CD4-positive, alpha-beta memory T cell (primary cell): ENCODE measurements at regions of chr3 and their contacts with region 1.

Region 1: DNA sequence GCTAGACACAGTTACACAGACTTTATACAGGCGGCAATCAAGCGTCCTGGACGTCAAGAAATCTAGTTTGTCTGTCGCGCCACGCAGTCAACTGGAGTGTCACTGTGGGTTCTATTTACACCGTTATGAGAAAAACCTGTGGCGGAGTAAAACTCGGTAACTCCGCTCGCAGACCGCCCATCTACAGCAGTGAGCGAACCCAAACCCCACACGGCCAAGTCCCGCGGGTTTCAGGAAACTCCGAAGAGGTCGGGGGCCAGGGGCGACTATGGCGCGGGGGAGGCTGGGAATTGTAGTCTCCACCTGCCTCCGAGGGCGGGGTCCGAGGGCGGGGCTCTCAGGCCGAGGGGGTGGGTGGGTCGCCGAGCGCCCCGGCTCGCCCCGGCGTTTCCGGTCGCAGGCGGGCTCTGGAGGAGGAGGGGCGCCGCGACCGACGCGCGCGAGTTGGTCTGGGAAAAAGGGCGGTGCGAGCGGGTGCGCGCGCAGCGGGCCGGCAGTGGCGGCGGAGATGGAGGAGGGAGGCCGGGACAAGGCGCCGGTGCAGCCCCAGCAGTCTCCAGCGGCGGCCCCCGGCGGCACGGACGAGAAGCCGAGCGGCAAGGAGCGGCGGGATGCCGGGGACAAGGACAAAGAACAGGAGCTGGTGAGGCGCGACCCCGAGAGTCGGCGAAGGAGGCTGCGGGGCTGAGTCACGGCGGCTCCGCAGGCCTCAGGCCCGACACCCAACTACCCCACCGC is at the start of gene PSMD2:
- DNase-seq: peak; percentile 96 to 97 (median 96)
- H3K4me3 ChIP-seq: peak within 1 kb of the TSS; percentile 68 to 85
- H3K4me3 Mint-ChIP-seq: peak within 1 kb of the TSS; percentile 88 to 96 (median 94)
- H3K27ac ChIP-seq: peak within 1 kb of the TSS; percentile 73
- H3K27ac Mint-ChIP-seq: peak within 1 kb of the TSS; percentile 90 to 95 (median 94)
- H3K4me1 ChIP-seq: peaks cover 14% of the 10 kb centered on the region
- H3K4me1 Mint-ChIP-seq: peaks cover 14 to 35% (median 21%) of the 10 kb centered on the region in 4 donors
- H3K27me3 ChIP-seq: no peaks in the 10 kb centered on the region
- H3K27me3 Mint-ChIP-seq: no peaks in the 10 kb centered on the region
- total RNA-seq, gene PSMD2: 148 to 154 TPM

Region 2: DNA sequence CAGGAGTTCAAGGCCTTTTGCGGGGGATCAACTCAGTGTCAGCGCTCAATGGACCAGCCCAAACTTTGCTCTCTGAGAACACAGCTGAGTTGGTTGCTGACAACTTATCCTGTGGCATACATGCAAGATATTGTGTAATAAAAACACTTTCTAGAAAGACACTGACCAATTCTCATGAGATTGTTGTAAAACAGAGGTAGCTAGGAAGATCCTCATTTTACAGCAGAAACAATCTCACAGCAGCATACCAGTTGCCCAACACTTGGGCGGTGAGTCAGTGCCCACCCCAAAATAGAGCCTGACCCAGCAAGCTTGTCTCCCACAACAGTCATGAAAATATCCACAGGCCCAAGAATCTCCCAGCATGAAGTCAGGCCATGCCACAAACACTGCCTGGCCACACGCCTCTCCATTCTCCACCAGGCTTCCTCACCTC is 761.6 kb before region 1 on chr3:
- CTCF ChIA-PET with region 1: no interaction called
- POLR2A ChIA-PET with region 1: no interaction called
- intact Hi-C with region 1: no loop called
- DNase-seq: no peak
- H3K4me3 ChIP-seq: no peak overlapping the region
- H3K4me3 Mint-ChIP-seq: no peak overlapping the region
- H3K27ac ChIP-seq: no peak overlapping the region
- H3K27ac Mint-ChIP-seq: peak overlapping the region in 5 of 7 donors; percentile 10 to 74 (median 50)
- H3K4me1 ChIP-seq: peaks cover 64% of the 10 kb centered on the region
- H3K4me1 Mint-ChIP-seq: peaks cover 54 to 79% (median 68%) of the 10 kb centered on the region in 4 donors
- H3K27me3 ChIP-seq: no peaks in the 10 kb centered on the region
- H3K27me3 Mint-ChIP-seq: no peaks in the 10 kb centered on the region

Region 3: DNA sequence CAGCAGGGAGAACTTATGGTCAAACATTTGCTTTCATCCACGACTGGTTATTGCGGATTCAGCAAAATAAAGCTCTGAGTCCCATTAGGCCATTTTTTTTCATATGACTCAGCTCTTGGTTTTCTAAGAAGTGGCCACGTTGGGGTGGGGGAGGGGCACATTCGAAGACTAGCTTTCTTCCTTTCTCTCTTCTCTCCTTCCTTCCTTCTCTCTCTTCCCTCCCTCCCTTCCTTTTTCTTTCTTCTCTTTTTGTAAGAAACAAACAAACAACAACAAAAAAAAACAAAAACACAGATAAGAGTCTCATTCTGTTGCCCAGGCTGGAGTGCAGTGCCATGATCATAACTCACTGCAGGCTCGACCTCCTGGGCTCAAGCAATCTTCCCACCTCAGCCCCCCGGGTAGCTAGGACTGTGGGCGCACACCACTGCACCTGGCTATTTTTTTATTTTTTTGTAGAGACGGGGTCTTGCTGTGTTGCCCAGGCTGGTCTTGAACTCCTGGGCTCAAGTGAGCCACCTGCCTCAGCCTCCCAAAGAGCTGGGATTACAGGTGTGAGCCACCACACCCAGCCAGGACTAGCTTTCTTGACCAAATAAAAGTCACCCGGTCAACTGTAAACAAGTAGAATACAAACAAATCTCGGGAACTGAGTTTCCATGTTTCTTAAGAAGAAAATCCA is 322.8 kb before region 1 on chr3:
- CTCF ChIA-PET with region 1: no interaction called
- POLR2A ChIA-PET with region 1: no interaction called
- intact Hi-C with region 1: no loop called
- DNase-seq: no peak
- H3K4me3 ChIP-seq: no peak overlapping the region
- H3K4me3 Mint-ChIP-seq: no peak overlapping the region
- H3K27ac ChIP-seq: no peak overlapping the region
- H3K27ac Mint-ChIP-seq: peak overlapping the region in 1 of 7 donors; percentile 6
- H3K4me1 ChIP-seq: no peaks in the 10 kb centered on the region
- H3K4me1 Mint-ChIP-seq: no peaks in the 10 kb centered on the region
- H3K27me3 ChIP-seq: no peaks in the 10 kb centered on the region
- H3K27me3 Mint-ChIP-seq: no peaks in the 10 kb centered on the region

Region 4: GRCh38 chr3:184017672-184018423 is 281.1 kb before region 1 on chr3 and contains the start of gene ABCC5:
- CTCF ChIA-PET with region 1: interaction called, 4 read pairs
- POLR2A ChIA-PET with region 1: no interaction called
- intact Hi-C with region 1: loop called (anchors 1 kb)
- DNase-seq: peak; percentile 79 to 84 (median 82)
- H3K4me3 ChIP-seq: peak within 1 kb of the TSS; percentile 93 to 96
- H3K4me3 Mint-ChIP-seq: peak within 1 kb of the TSS; percentile 98 to 100 (median 100)
- H3K27ac ChIP-seq: peak within 1 kb of the TSS; percentile 43
- H3K27ac Mint-ChIP-seq: peak within 1 kb of the TSS; percentile 90 to 96 (median 93)
- H3K4me1 ChIP-seq: peaks cover 17% of the 10 kb centered on the region
- H3K4me1 Mint-ChIP-seq: peaks cover 16 to 35% (median 24%) of the 10 kb centered on the region in 4 donors
- H3K27me3 ChIP-seq: no peaks in the 10 kb centered on the region
- H3K27me3 Mint-ChIP-seq: peaks cover 6 to 8% of the 10 kb centered on the region in 2 donors
- total RNA-seq, gene ABCC5: 42.3 to 42.6 TPM

Region 5: DNA sequence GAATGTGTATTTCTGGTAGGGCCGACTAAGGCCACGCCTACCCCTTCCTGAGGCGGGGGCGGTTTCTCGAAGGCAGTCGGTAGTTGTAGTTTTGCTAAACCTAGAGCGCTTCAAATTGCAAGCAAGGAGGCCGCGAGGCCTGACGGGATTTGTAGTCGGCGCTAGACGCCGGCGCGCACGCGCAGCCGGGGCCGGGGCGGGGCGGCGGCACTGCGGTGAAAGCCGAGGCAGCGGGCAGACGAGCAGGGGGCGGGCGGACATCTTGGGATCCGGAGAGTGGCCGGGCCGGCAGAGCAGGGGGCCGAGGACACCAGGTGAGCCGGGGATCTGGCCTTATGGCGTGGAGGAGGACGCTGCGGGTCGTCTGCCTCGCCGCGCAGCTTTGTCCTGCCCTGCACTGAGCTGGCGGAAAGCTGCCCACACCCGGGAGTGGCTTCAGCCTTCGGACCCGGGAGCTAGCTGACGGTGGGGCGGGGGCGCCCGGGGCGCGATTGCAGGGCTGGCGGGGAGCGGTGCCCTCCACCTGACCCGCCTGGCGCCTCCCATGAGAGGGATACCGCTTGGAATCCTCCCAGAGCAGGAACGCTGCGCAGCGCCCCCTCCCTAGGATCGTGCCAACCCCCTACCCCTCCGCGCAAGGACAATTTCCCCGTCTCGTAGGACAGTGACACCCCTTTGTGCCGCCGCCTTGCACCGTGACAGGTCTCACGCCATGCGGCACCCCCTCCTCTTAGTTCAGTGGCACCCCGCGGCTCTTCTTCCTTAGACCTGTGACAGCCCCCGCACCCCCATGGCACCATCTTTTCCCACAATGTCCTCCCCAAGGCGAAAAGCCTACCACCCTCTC is 124.1 kb before region 1 on chr3 and contains the start of gene AP2M1:
- CTCF ChIA-PET with region 1: no interaction called
- POLR2A ChIA-PET with region 1: interaction called, 8 read pairs
- intact Hi-C with region 1: loop called (anchors 1 kb)
- DNase-seq: peak; percentile 98 to 99 (median 99)
- H3K4me3 ChIP-seq: peak within 1 kb of the TSS; percentile 68 to 90
- H3K4me3 Mint-ChIP-seq: peak within 1 kb of the TSS; percentile 90 to 98 (median 96)
- H3K27ac ChIP-seq: peak within 1 kb of the TSS; percentile 88
- H3K27ac Mint-ChIP-seq: peak within 1 kb of the TSS; percentile 88 to 95 (median 92)
- H3K4me1 ChIP-seq: peaks cover 37% of the 10 kb centered on the region
- H3K4me1 Mint-ChIP-seq: peaks cover 17 to 43% (median 30%) of the 10 kb centered on the region in 4 donors
- H3K27me3 ChIP-seq: no peaks in the 10 kb centered on the region
- H3K27me3 Mint-ChIP-seq: no peaks in the 10 kb centered on the region
- total RNA-seq, gene AP2M1: 206 to 208 TPM

Region 6: GRCh38 chr3:184261270-184261853 is 37.6 kb before region 1 on chr3 and contains the start of gene CAMK2N2:
- CTCF ChIA-PET with region 1: no interaction called
- POLR2A ChIA-PET with region 1: no interaction called
- intact Hi-C with region 1: loop called (anchors 2 kb)
- DNase-seq: peak; percentile 31 to 71 (median 36)
- H3K4me3 ChIP-seq: peak within 1 kb of the TSS; percentile 52 to 61
- H3K4me3 Mint-ChIP-seq: peak within 1 kb of the TSS; percentile 86 to 94 (median 90)
- H3K27ac ChIP-seq: no peak within 1 kb of the TSS
- H3K27ac Mint-ChIP-seq: peak within 1 kb of the TSS; percentile 0 to 90 (median 68)
- H3K4me1 ChIP-seq: peaks cover 25% of the 10 kb centered on the region
- H3K4me1 Mint-ChIP-seq: peaks cover 14 to 35% (median 18%) of the 10 kb centered on the region in 4 donors
- H3K27me3 ChIP-seq: no peaks in the 10 kb centered on the region
- H3K27me3 Mint-ChIP-seq: peaks cover 3 to 10% of the 10 kb centered on the region in 2 donors
- total RNA-seq, gene CAMK2N2: 0.25 TPM in 1 of 2 experiments, not detected in the other

Region 7: DNA sequence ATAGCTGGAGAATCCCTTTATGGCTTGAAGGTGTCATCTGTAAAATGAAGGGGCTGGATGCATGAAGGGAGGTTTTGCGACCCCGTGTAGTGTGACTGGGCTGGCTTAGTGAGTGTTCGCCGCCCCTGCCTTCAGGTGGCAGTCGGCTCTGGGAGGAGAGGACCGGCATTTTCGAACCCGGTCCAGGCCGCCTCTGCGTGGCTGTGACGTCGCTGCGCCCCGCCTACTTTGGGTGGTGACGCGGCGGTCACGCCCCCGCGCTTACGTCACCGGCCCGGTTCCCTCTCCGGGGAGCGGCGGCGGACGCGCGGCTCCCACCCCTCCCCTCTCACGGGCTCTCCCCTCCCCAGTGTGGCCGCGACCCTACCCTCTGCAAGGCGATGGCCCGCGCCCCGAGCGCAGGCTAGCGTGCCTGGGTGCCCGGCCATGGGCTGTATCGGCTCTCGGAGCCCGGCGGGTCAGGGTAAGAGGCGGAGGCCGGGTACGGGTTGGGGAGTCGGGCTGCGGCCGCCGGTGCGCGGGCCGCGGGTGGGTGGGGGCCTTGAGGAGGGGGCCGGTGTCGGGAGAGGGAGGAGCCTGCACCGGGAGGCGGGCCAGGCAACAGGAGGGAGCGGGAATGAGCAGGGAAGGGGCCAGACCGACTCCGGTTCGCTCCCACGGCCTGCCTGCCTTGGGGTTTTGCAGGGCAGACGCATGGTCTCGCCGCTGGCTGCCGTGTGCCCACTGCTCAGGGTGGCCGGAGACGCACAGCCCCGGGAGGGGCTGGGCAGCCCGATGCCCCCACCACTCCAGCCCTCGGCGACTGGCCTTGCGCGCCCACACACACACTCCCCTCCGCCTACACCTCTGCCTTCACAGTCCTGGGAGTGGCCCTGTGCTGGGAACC is 37.0 kb after region 1 on chr3:
- CTCF ChIA-PET with region 1: interaction called, 3 read pairs
- POLR2A ChIA-PET with region 1: interaction called, 4 read pairs
- intact Hi-C with region 1: loop called (anchors 2 kb)
- DNase-seq: peak; percentile 84 to 89 (median 87)
- H3K4me3 ChIP-seq: peak overlapping the region; percentile 53 to 69
- H3K4me3 Mint-ChIP-seq: peak overlapping the region; percentile 87 to 92 (median 90)
- H3K27ac ChIP-seq: peak overlapping the region; percentile 92
- H3K27ac Mint-ChIP-seq: peak overlapping the region; percentile 94 to 99 (median 98)
- H3K4me1 ChIP-seq: peaks cover 20% of the 10 kb centered on the region
- H3K4me1 Mint-ChIP-seq: peaks cover 23 to 47% (median 30%) of the 10 kb centered on the region in 4 donors
- H3K27me3 ChIP-seq: no peaks in the 10 kb centered on the region
- H3K27me3 Mint-ChIP-seq: no peaks in the 10 kb centered on the region